HEK293 (cell line): ENCODE measurements at regions of chr13 and their contacts with region 1.

Region 1: GRCh38 chr13:98653463-98653985 is 76.6 kb upstream of the STK24 start:
- H3K4me3 ChIP-seq: no peak overlapping the region
- H3K27ac ChIP-seq: no peak overlapping the region
- H3K4me1 ChIP-seq: no peaks in the 10 kb centered on the region
- CTCF ChIP-seq: no peak

Region 2: DNA sequence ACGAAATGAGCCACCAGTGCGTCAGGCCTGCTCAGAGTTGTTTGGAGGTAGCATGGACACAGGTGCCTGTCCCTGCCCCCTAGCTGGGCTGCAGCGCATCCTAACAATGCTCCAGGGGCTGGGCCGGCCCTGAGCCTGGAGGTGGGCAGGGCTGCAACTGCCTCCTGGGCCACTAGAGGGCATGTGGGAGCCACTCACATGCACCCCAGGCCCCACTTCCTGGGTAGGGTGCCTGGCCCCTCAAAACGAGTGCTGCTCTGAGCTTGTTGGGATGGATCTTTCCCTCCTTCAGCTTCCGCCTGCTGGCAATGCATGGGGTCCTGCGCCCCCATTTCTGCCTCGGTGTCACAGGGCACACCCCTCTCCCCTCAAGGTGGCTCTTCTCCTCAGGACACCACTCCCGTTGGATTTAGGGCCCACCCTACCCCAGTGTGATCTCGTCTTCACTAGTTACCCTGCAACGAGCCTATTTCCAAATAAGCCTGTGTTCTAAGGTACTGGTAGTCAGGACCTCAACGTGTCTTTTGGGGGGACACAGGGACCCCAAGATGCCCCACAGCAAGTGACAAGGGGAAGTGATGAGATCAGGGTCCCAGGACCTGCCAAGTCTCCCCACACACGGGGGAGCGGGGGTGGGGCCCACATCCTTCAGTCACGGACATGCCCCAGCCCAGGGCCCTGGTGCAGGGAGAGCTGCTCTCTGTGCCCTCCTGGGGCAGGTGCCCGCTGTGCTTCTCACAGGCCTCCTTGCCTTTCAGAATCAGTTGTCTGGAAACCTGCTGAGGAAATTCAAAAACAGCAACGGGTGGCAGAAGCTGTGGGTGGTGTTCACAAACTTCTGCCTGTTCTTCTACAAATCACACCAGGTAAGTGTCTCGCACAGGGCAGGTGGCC is 207.9 kb before region 1 on chr13:
- CTCF ChIA-PET with region 1: interaction called, 17 read pairs
- POLR2A ChIA-PET with region 1: no interaction called
- H3K4me3 ChIP-seq: no peak overlapping the region
- H3K27ac ChIP-seq: no peak overlapping the region
- H3K4me1 ChIP-seq: no peaks in the 10 kb centered on the region
- CTCF ChIP-seq: no peak; the same call in none of the 2 replicates

Region 3: DNA sequence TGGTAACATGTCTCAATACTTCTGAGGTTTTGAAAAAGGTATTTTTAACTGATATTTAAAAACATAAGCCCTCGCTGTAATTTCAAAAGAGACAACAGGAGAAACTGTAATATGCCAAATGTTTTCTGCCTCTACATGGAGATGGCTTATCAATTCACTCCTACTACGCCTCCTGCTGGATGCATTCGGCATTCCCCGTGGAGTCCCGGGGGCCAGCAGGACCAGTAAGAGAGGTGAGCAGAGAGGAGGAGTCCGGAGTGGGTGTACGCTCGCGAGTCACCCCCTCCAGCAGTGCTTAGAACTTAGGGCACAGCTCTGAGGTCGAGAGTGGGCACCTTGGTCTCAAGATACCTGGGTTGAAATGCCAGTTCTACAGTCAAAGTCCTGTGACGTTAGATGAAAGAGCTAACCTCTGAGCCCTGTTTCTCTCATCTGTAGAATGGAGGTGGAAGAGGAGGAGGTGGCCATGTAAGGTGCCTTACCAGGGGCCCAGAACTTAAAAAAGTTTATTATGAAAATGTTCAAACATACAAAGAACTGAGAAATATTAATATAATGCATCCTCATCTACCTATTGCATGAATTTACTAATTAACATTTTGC is 186.8 kb before region 1 on chr13:
- CTCF ChIA-PET with region 1: interaction called, 11 read pairs
- POLR2A ChIA-PET with region 1: no interaction called
- H3K4me3 ChIP-seq: no peak overlapping the region
- H3K27ac ChIP-seq: no peak overlapping the region
- H3K4me1 ChIP-seq: no peaks in the 10 kb centered on the region
- CTCF ChIP-seq: no peak

Region 4: GRCh38 chr13:98484289-98485219 is 169.0 kb before region 1 on chr13:
- CTCF ChIA-PET with region 1: interaction called, 15 read pairs
- POLR2A ChIA-PET with region 1: interaction called, 7 read pairs
- H3K4me3 ChIP-seq: peak overlapping the region; percentile 18
- H3K27ac ChIP-seq: peak overlapping the region; percentile 58
- H3K4me1 ChIP-seq: peaks cover 15% of the 10 kb centered on the region
- CTCF ChIP-seq: no peak

Region 5: GRCh38 chr13:98581971-98582680 is 71.4 kb before region 1 on chr13:
- CTCF ChIA-PET with region 1: interaction called, 13 read pairs
- POLR2A ChIA-PET with region 1: no interaction called
- H3K4me3 ChIP-seq: no peak overlapping the region
- H3K27ac ChIP-seq: no peak overlapping the region
- H3K4me1 ChIP-seq: 0 out of 2 replicates have a peak, but pooled peaks cover 5% of the 10 kb centered on the region
- CTCF ChIP-seq: no peak

Region 6: GRCh38 chr13:98664039-98664438 is 10.5 kb after region 1 on chr13:
- CTCF ChIA-PET with region 1: interaction called, 17 read pairs
- POLR2A ChIA-PET with region 1: interaction called, 3 read pairs
- H3K4me3 ChIP-seq: no peak overlapping the region
- H3K27ac ChIP-seq: no peak overlapping the region
- H3K4me1 ChIP-seq: no peaks in the 10 kb centered on the region
- CTCF ChIP-seq: no peak

Region 7: GRCh38 chr13:98678741-98679140 is 25.2 kb after region 1 on chr13:
- CTCF ChIA-PET with region 1: no interaction called
- POLR2A ChIA-PET with region 1: no interaction called
- H3K4me3 ChIP-seq: no peak overlapping the region
- H3K27ac ChIP-seq: no peak overlapping the region
- H3K4me1 ChIP-seq: no peaks in the 10 kb centered on the region
- CTCF ChIP-seq: no peak

Region 8: GRCh38 chr13:98821372-98822224 is 168.1 kb after region 1 on chr13:
- CTCF ChIA-PET with region 1: no interaction called
- POLR2A ChIA-PET with region 1: no interaction called
- H3K4me3 ChIP-seq: no peak overlapping the region
- H3K27ac ChIP-seq: no peak overlapping the region
- H3K4me1 ChIP-seq: no peaks in the 10 kb centered on the region
- CTCF ChIP-seq: no peak